ENCODE measurements at regions of chr2 and their contacts with region 1.

Region 1: GRCh38 chr2:95022309-95023221 is 2.9 kb upstream of the MAL start:
- DNase-seq: peak; percentile 47 to 71
- ATAC-seq: peak; percentile 46 to 75 (median 72)
- H3K4me3 ChIP-seq: no peak overlapping the region
- H3K27ac ChIP-seq: no peak overlapping the region
- H3K4me1 ChIP-seq: peaks cover 0 to 24% (median 13%) of the 10 kb centered on the region in 9 donors
- H3K27me3 ChIP-seq: peaks cover 13 to 72% (median 58%) of the 10 kb centered on the region in 7 donors
- CTCF ChIP-seq: peak; percentile 67 to 95 (median 81)

Region 2: DNA sequence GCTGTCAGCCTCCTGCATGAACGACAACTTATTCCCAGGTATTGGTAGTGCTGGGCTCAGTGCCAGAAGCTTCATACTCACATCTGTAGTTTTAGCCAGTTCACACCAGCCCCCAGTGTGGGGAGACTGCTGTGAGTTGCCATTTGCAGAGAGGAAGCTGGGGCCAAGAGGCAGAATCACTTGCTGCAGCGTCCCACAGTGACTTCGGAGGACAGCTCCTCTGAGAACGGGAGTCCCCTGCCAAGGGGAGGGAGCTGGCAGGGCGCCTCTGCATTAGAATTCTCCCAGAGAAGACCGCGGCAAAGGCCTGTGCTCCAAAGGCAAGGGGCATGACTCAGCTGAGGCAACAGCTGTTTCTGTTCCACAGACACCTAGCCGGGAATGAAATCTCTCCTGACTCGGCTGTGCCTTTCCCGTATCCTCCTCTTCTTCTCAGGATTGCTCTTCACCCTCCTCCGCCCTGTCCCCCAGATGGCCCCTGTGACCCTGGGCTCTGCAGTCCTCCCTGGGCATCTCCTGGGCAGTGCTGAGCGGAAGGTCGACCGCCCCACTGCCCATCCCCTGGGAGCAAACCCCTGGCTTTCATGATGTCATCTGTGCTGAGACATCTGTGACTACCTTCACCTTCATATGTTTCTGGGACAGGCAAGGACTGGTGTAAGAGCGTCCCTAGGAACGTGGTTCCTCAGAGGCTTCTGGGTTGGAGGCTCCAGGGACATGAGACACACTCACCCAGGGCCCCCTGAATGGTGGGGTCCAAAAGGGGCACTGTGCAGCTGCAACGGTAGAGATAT is 20.9 kb after region 1 on chr2:
- intact Hi-C with region 1: no loop called
- DNase-seq: peak; percentile 89
- ATAC-seq: peak; percentile 92 to 98 (median 96)
- H3K4me3 ChIP-seq: no peak overlapping the region
- H3K27ac ChIP-seq: peak overlapping the region; percentile 32 to 83 (median 72)
- H3K4me1 ChIP-seq: peaks cover 3 to 31% (median 15%) of the 10 kb centered on the region in 9 donors
- H3K27me3 ChIP-seq: no peaks in the 10 kb centered on the region
- CTCF ChIP-seq: no peak

Region 3: GRCh38 chr2:95076784-95077529 is 54.4 kb after region 1 on chr2:
- intact Hi-C with region 1: loop called in 3 of 10 experiments (anchors 2 to 10 kb)
- DNase-seq: peak; percentile 57 to 74
- ATAC-seq: peak; percentile 56 to 89 (median 78)
- H3K4me3 ChIP-seq: peak overlapping the region in 9 of 10 donors; percentile 20 to 61 (median 51)
- H3K27ac ChIP-seq: no peak overlapping the region
- H3K4me1 ChIP-seq: peaks cover 0 to 10% (median 9%) of the 10 kb centered on the region in 9 donors
- H3K27me3 ChIP-seq: peaks cover 5 to 55% (median 54%) of the 10 kb centered on the region in 7 donors
- CTCF ChIP-seq: peak; percentile 60 to 86 (median 83)

Region 4: GRCh38 chr2:95115418-95115817 is 92.9 kb after region 1 on chr2:
- intact Hi-C with region 1: loop called in 7 of 10 experiments (anchors 5 to 10 kb)
- DNase-seq: peak; percentile 45 to 56
- ATAC-seq: peak; percentile 76 to 93 (median 87)
- H3K4me3 ChIP-seq: no peak overlapping the region
- H3K27ac ChIP-seq: no peak overlapping the region
- H3K4me1 ChIP-seq: peaks cover 5 to 41% (median 30%) of the 10 kb centered on the region in 9 donors
- H3K27me3 ChIP-seq: no peaks in the 10 kb centered on the region
- CTCF ChIP-seq: peak; percentile 39 to 80 (median 71)

Region 5: DNA sequence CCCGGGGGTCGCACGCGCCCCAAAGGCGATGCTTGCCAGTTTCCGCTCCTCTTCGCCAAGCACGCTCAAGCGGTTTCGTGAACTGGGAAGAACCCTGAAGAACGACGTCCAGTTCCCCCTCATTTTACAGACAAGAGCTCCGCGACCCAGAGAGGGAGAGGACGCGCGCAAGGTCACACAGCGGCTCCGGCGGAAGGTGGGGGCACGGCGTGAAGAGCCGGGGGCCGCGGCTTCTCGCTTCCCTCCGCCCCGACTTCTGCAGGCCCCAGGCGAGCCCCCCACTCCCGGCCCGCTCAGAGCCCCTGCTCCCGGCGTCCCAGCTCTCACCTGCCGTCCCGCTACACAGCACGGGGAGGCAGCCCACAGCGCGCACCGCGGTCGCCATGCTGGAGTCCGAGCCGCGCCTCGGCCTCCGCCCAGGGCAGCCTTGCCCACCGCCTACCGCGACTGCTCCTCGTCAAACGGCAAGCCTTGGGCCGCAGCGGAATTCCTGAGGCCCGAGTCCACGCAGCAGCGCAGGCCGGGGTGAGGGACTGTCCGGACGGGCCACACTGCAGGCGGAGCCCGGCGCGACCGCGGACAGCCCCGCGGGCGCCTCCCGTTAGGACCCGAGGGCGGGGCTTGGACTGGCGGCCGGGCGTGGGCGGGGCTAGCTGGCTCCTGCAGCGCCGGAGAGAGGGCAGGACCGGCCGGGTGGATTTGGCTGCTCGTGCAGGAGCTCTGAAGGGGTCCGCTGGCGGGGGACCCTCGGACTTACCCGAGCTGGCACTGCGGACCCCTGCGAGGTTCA is 99.0 kb after region 1 on chr2 and contains the start of gene MRPS5:
- intact Hi-C with region 1: loop called in 6 of 10 experiments (anchors 5 to 10 kb)
- DNase-seq: peak; percentile 88 to 92
- ATAC-seq: peak; percentile 95 to 98 (median 98)
- H3K4me3 ChIP-seq: peak within 1 kb of the TSS; percentile 76 to 99 (median 88)
- H3K27ac ChIP-seq: peak within 1 kb of the TSS; percentile 93 to 99 (median 97)
- H3K4me1 ChIP-seq: peaks cover 9 to 41% (median 36%) of the 10 kb centered on the region in 9 donors
- H3K27me3 ChIP-seq: no peaks in the 10 kb centered on the region
- CTCF ChIP-seq: peak in 3 of 9 donors; percentile 28 to 44 (median 41)
- total RNA-seq, gene MRPS5: 50.6 to 85.7 (median 61.5) TPM